ENCODE measurements at regions of chr19 and their contacts with region 1.

Region 1: GRCh38 chr19:36132489-36132891 is 7.4 kb upstream of the CAPNS1 start:
- DNase-seq: no peak
- H3K4me3 ChIP-seq: no peak overlapping the region
- H3K27ac ChIP-seq: no peak overlapping the region
- H3K27me3 ChIP-seq: no peaks in the 10 kb centered on the region
- CTCF ChIP-seq: no peak

Region 2: GRCh38 chr19:35995048-35995993 is 137.2 kb before region 1 on chr19 and contains the start of gene SDHAF1:
- intact Hi-C with region 1: loop called in 1 of 2 experiments (anchors 5 kb)
- DNase-seq: peak; percentile 95 to 99 (median 98)
- H3K4me3 ChIP-seq: peak within 1 kb of the TSS; percentile 65 to 99 (median 90)
- H3K27ac ChIP-seq: peak within 1 kb of the TSS in 55 of 59 donors; percentile 24 to 91 (median 75)
- H3K27me3 ChIP-seq: no peaks in the 10 kb centered on the region
- CTCF ChIP-seq: peak in 31 of 56 donors; percentile 17 to 56 (median 28)
- total RNA-seq, gene SDHAF1: 13.8 to 31.6 (median 21.0) TPM

Region 3: DNA sequence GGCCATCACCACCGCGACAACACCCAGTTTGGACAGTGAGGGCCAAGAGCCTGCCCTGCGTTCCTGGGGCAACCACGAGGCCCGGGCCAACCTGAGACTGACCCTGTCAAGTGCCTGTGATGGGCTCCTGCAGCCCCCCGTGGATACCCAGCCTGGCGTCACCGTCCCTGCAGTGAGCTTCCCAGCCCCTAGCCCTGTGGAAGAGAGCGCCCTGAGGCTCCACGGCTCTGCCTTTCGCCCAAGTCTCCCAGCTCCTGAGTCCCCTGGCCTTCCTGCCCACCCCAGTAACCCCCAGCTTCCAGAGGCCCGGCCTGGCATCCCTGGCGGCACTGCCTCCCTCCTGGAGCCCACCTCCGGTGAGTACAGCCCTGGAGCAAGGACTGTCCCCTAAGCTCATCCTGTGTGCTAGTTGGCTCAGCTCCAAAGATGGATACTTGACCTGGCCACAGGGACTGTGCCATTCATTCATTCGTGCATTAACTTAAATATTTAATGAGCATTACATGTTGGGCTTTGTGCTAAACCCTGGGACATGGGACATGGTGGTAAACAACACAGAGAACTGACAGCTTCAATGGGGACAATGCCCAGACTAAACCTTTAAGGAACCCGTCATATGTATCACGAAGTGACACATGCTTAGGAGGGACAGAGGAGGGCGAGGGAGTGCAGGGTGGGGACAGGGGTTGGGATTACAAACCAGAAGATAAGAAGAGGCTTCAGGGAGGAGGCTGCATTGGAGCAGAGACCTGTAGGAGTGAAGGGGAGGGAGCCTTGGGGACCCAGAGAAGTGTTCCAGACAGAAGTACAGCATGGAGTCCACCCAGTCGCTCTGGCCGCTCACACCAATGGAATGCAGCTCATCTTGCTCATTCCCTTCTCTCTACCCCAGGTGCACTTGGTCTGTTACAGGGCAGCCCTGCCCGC is 28.6 kb before region 1 on chr19:
- intact Hi-C with region 1: no loop called
- DNase-seq: no peak
- H3K4me3 ChIP-seq: no peak overlapping the region
- H3K27ac ChIP-seq: peak overlapping the region in 2 of 59 donors; percentile 3 to 31
- H3K27me3 ChIP-seq: no peaks in the 10 kb centered on the region
- CTCF ChIP-seq: no peak

Region 4: GRCh38 chr19:36114763-36115452 is 17.6 kb before region 1 on chr19 and contains the start of gene POLR2I:
- intact Hi-C with region 1: loop called in 1 of 2 experiments (anchors 1 kb)
- DNase-seq: peak; percentile 97 to 100 (median 100)
- H3K4me3 ChIP-seq: peak within 1 kb of the TSS; percentile 61 to 98 (median 92)
- H3K27ac ChIP-seq: peak within 1 kb of the TSS; percentile 75 to 99 (median 95)
- H3K27me3 ChIP-seq: no peaks in the 10 kb centered on the region
- CTCF ChIP-seq: peak in 20 of 56 donors; percentile 1 to 60 (median 20)
- total RNA-seq, gene POLR2I: 61.9 to 165 (median 106) TPM

Region 5: DNA sequence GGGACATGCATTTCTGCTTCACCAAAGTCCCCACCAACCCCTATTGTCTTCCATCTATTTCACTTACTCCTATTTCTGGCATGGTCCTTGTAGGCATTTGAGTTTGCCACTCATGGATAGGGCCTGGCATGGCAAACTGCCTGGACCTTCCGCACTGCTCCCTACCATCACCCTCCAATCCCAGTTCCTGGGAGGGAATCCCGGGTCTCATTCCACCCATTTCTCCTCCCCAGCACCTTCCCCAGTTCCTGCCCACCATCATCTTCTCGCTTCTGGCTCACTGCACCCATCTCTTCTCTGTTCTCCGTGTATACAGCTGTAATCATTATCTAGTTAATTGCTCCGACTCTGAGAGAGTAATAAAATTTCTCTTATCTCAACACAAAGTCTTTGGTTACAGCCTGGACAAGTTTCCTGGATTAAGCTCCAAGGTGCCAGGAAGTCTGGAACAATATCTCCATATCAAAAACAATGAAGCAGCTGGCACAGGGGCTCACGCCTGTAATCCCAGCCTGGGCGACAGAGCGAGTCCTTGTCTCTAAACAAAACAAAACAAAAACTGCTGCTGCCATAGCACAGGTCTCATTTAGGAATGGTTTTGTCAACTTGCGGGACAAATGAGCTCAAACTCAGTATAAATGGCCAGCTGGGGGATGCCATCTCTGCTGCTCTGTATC is 36.7 kb after region 1 on chr19:
- intact Hi-C with region 1: loop called (anchors 1 to 2 kb)
- DNase-seq: no peak
- H3K4me3 ChIP-seq: no peak overlapping the region
- H3K27ac ChIP-seq: peak overlapping the region in 14 of 59 donors; percentile 6 to 63 (median 38)
- H3K27me3 ChIP-seq: no peaks in the 10 kb centered on the region
- CTCF ChIP-seq: no peak